Heart right ventricle (tissue), 16 donors: ENCODE measurements at regions of chr3 and their contacts with region 1.

Region 1: DNA sequence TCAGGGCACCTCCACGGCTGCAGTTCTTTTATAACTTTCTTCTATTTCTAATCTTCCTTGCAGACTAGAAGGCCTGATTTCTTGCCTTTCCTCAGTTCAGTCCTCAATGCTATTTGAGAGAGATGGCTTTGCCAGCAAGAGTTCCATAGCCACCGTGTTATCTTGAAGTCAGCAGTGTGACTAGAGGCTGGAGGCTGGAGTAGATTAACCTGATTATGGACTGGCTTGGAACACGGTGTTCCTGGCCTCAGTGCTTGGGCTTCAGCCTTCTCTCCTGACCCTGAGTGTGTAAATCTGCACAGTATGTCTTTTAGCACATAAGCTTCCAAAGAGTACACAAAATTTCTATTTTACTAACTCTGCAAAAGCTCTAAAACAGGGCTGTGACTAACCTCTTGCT is 61.4 kb downstream of the CCDC54 start:
- DNase-seq: no peak
- ATAC-seq: no peak
- H3K4me3 ChIP-seq: no peak overlapping the region
- H3K27ac ChIP-seq: no peak overlapping the region
- H3K4me1 ChIP-seq: no peaks in the 10 kb centered on the region
- H3K27me3 ChIP-seq: peaks cover 0 to 4% (median 0%) of the 10 kb centered on the region in 7 donors
- CTCF ChIP-seq: no peak

Region 2: GRCh38 chr3:107512108-107512507 is 73.4 kb after region 1 on chr3:
- intact Hi-C with region 1: loop called in 1 of 10 experiments (anchors 5 kb)
- DNase-seq: no peak
- ATAC-seq: no peak
- H3K4me3 ChIP-seq: no peak overlapping the region
- H3K27ac ChIP-seq: no peak overlapping the region
- H3K4me1 ChIP-seq: no peaks in the 10 kb centered on the region
- H3K27me3 ChIP-seq: peaks cover 0 to 13% (median 0%) of the 10 kb centered on the region in 7 donors
- CTCF ChIP-seq: no peak

Region 3: DNA sequence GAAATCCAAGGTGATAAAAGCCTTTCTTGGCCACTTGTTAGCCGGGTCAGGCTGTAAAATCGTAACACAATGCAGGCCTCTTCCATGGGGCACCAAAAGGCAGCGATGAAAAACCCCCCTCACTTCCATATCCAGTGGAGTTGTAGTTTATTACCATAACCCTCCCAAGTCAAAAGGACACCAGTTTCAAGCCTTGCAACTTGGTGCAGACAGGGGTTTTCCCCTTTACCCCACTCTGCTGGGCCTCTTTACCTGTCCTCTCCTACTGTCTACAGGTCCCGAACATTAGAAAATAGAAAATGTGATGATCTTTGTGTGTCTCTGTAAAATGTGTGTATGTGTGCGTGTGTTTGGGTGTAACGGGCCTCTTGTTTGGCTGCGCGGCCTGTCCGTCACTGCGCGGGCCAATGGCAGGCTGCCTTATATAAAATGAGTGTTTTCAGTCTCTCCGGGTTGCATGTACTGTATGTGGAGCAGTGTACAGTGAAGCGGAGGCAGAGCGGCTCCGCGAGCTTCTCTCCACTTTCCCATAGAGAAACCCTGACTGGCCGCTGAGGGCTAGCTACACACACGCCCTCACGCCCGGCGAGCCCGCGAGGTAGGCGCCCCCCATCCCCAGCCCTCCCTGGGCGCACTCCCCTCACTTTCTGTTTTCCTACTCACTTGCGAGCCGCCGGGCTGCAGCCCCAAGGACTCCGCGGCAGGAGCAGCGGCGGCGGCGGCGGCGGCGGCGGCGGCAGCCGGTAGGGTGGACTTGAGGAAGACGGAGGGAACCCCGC is 84.0 kb after region 1 on chr3 and contains the start of gene BBX:
- intact Hi-C with region 1: loop called in 4 of 10 experiments (anchors 2 to 5 kb)
- DNase-seq: peak; percentile 90 to 95
- ATAC-seq: peak; percentile 96 to 98 (median 98)
- H3K4me3 ChIP-seq: peak within 1 kb of the TSS; percentile 70 to 94 (median 91)
- H3K27ac ChIP-seq: peak within 1 kb of the TSS; percentile 63 to 96 (median 94)
- H3K4me1 ChIP-seq: peaks cover 0 to 20% (median 14%) of the 10 kb centered on the region in 9 donors
- H3K27me3 ChIP-seq: no peaks in the 10 kb centered on the region
- CTCF ChIP-seq: no peak
- total RNA-seq, gene BBX: 21.3 to 49.8 (median 39.7) TPM

Region 4: DNA sequence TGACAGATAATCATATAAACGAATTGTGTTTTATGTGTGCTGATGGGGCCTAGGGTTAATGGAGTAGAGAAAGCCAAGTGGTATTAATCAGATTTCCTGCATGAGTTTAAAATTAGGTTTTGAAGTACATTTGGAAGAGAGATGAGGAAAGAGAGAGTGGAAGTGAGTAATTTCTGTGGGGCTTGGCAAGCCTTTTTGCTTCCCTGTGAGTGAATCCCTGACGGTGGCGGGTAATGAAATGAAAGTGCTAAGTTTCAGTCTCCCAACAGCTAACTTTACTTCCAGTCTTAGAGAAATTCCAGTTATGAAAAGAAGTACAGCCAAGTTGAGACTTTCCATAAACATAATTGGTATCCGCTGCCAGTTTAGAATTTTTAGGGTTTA is 223.5 kb after region 1 on chr3:
- intact Hi-C with region 1: no loop called
- DNase-seq: peak in 1 of 2 donors; percentile 31
- ATAC-seq: peak in 7 of 8 donors; percentile 58 to 85 (median 71)
- H3K4me3 ChIP-seq: peak overlapping the region in 6 of 10 donors; percentile 0 to 20 (median 6)
- H3K27ac ChIP-seq: peak overlapping the region in 6 of 10 donors; percentile 1 to 72 (median 27)
- H3K4me1 ChIP-seq: peaks cover 0 to 37% (median 25%) of the 10 kb centered on the region in 9 donors
- H3K27me3 ChIP-seq: no peaks in the 10 kb centered on the region
- CTCF ChIP-seq: no peak